ENCODE measurements at regions of chr19 and their contacts with region 1.

Region 1: GRCh38 chr19:40633207-40633606 is 32.0 kb downstream of the LTBP4 start:
- DNase-seq: no peak
- ATAC-seq: no peak
- H3K4me3 ChIP-seq: no peak overlapping the region
- H3K4me3 Mint-ChIP-seq: no peak overlapping the region
- H3K27ac ChIP-seq: no peak overlapping the region
- H3K27ac Mint-ChIP-seq: no peak overlapping the region
- H3K4me1 ChIP-seq: peaks cover 0 to 5% of the 10 kb centered on the region in 2 donors
- H3K4me1 Mint-ChIP-seq: peaks cover 4% of the 10 kb centered on the region
- H3K27me3 ChIP-seq: peaks cover 0 to 13% (median 0%) of the 10 kb centered on the region in 4 experiments
- H3K27me3 Mint-ChIP-seq: peaks cover 10% of the 10 kb centered on the region
- CTCF ChIP-seq: no peak

Region 2: GRCh38 chr19:40139533-40140287 is 493.5 kb before region 1 on chr19:
- CTCF ChIA-PET with region 1: interaction called, 39 read pairs
- POLR2A ChIA-PET with region 1: no interaction called
- intact Hi-C with region 1: no loop called
- DNase-seq: peak; percentile 73
- ATAC-seq: no peak
- H3K4me3 ChIP-seq: no peak overlapping the region
- H3K4me3 Mint-ChIP-seq: no peak overlapping the region
- H3K27ac ChIP-seq: no peak overlapping the region
- H3K27ac Mint-ChIP-seq: peak overlapping the region; percentile 46
- H3K4me1 ChIP-seq: peaks cover 23 to 26% of the 10 kb centered on the region in 2 donors
- H3K4me1 Mint-ChIP-seq: peaks cover 30% of the 10 kb centered on the region
- H3K27me3 ChIP-seq: no peaks in the 10 kb centered on the region
- H3K27me3 Mint-ChIP-seq: peaks cover 10% of the 10 kb centered on the region
- CTCF ChIP-seq: peak; percentile 81

Region 3: GRCh38 chr19:40529093-40529954 is 103.9 kb before region 1 on chr19:
- CTCF ChIA-PET with region 1: interaction called, 17 read pairs
- POLR2A ChIA-PET with region 1: no interaction called
- intact Hi-C with region 1: loop called (anchors 1 kb)
- DNase-seq: peak; percentile 95
- ATAC-seq: peak; percentile 91
- H3K4me3 ChIP-seq: peak overlapping the region; percentile 9 to 69 (median 41)
- H3K4me3 Mint-ChIP-seq: peak overlapping the region; percentile 82
- H3K27ac ChIP-seq: no peak overlapping the region
- H3K27ac Mint-ChIP-seq: peak overlapping the region; percentile 64
- H3K4me1 ChIP-seq: peaks cover 13 to 14% of the 10 kb centered on the region in 2 donors
- H3K4me1 Mint-ChIP-seq: peaks cover 13% of the 10 kb centered on the region
- H3K27me3 ChIP-seq: peaks cover 0 to 35% (median 18%) of the 10 kb centered on the region in 4 experiments
- H3K27me3 Mint-ChIP-seq: peaks cover 44% of the 10 kb centered on the region
- CTCF ChIP-seq: peak; percentile 91

Region 4: GRCh38 chr19:40549007-40549708 is 84.0 kb before region 1 on chr19:
- CTCF ChIA-PET with region 1: interaction called, 20 read pairs
- POLR2A ChIA-PET with region 1: no interaction called
- intact Hi-C with region 1: loop called (anchors 5 kb)
- DNase-seq: peak; percentile 70
- ATAC-seq: peak; percentile 82
- H3K4me3 ChIP-seq: no peak overlapping the region
- H3K4me3 Mint-ChIP-seq: no peak overlapping the region
- H3K27ac ChIP-seq: no peak overlapping the region
- H3K27ac Mint-ChIP-seq: peak overlapping the region; percentile 22
- H3K4me1 ChIP-seq: peaks cover 4% of the 10 kb centered on the region in 2 donors
- H3K4me1 Mint-ChIP-seq: peaks cover 10% of the 10 kb centered on the region
- H3K27me3 ChIP-seq: peaks cover 0 to 49% (median 28%) of the 10 kb centered on the region in 4 experiments
- H3K27me3 Mint-ChIP-seq: peaks cover 48% of the 10 kb centered on the region
- CTCF ChIP-seq: peak; percentile 55

Region 5: DNA sequence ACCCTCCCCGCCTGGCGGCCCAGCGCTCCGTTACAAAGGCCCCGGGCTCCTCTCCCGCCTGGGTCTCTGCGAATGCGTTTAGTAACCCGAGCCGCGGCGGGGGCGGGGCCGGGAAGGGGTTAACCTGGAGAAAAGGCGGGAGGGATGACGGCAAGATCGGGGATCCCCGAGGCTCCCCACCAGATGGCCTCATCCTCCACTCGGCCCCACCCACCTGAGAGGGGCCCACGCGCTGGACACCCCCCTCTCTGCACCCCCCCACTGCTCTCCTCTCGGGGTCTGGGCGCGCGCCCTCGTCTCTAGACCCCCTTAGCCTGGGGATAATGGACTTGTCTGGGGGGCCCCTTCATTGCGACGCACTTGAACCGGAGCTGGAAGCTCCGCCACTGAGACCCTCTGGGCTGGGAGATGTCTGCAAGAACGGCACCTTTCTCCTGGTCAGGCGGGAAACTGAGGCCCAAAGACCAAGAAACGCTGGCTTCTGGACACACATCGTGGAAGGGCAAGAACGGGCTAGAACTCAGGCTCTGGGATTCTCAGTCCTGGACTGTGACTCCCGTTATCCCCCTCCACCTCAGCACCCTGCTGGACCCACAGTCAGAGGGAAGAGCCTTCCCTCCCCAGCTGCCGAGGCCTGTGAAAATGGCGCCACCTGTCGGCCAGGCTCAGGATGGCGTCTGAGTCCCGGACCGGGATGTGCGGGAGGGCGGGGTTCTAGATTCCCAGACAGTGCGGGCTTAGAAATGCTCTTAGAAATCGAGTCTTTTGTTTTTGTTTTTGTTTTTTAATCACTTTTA is 34.9 kb before region 1 on chr19:
- CTCF ChIA-PET with region 1: interaction called, 84 read pairs
- POLR2A ChIA-PET with region 1: interaction called, 3 read pairs
- intact Hi-C with region 1: loop called (anchors 1 kb)
- DNase-seq: peak; percentile 87
- ATAC-seq: peak; percentile 60
- H3K4me3 ChIP-seq: no peak overlapping the region
- H3K4me3 Mint-ChIP-seq: peak overlapping the region; percentile 61
- H3K27ac ChIP-seq: no peak overlapping the region
- H3K27ac Mint-ChIP-seq: peak overlapping the region; percentile 32
- H3K4me1 ChIP-seq: peaks cover 59 to 65% of the 10 kb centered on the region in 2 donors
- H3K4me1 Mint-ChIP-seq: peaks cover 45% of the 10 kb centered on the region
- H3K27me3 ChIP-seq: peaks cover 0 to 69% (median 40%) of the 10 kb centered on the region in 4 experiments
- H3K27me3 Mint-ChIP-seq: peaks cover 35% of the 10 kb centered on the region
- CTCF ChIP-seq: peak; percentile 98

Region 6: DNA sequence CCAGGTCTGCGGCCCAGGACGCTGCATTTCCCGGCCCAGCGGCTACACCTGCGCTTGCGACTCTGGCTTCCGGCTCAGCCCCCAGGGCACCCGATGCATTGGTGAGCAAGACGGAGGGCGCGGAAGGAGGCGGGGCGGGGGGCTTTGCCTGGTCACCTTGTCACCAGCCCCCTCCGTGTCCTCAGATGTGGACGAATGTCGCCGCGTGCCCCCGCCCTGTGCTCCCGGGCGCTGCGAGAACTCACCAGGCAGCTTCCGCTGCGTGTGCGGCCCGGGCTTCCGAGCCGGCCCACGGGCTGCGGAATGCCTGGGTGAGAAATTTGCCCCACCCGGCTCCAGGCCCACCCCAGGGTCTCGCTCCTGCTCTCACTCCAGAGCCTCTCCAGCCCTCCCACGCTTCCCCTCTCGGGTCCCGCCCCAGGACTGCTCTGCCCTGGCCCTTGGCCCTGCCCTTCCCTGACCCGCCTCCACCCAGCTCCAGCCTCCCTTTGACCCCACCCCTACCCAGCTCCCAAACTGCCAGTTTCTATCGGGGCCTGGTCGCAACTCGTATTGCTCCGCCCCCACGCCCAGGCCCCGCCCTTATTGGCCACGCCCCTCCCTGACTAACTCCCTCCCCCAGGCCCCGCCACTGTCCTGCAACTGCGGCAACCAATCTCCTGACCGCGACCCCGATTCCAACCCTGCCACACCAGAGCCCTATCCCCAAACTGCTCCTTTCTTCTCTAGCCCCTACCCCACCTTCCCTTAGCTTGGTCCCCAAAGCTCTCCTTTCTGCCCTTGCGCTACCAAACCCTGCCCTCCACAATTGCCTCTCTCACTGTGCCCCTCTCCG is 23.4 kb before region 1 on chr19:
- CTCF ChIA-PET with region 1: interaction called, 84 read pairs
- POLR2A ChIA-PET with region 1: interaction called, 4 read pairs
- intact Hi-C with region 1: loop called (anchors 1 kb)
- DNase-seq: peak; percentile 90
- ATAC-seq: peak; percentile 57
- H3K4me3 ChIP-seq: peak overlapping the region in 4 of 5 experiments; percentile 49 to 72 (median 62)
- H3K4me3 Mint-ChIP-seq: peak overlapping the region; percentile 92
- H3K27ac ChIP-seq: peak overlapping the region; percentile 83 to 93
- H3K27ac Mint-ChIP-seq: peak overlapping the region; percentile 98
- H3K4me1 ChIP-seq: peaks cover 38 to 58% of the 10 kb centered on the region in 2 donors
- H3K4me1 Mint-ChIP-seq: peaks cover 56% of the 10 kb centered on the region
- H3K27me3 ChIP-seq: no peaks in the 10 kb centered on the region
- H3K27me3 Mint-ChIP-seq: no peaks in the 10 kb centered on the region
- CTCF ChIP-seq: no peak

Region 7: DNA sequence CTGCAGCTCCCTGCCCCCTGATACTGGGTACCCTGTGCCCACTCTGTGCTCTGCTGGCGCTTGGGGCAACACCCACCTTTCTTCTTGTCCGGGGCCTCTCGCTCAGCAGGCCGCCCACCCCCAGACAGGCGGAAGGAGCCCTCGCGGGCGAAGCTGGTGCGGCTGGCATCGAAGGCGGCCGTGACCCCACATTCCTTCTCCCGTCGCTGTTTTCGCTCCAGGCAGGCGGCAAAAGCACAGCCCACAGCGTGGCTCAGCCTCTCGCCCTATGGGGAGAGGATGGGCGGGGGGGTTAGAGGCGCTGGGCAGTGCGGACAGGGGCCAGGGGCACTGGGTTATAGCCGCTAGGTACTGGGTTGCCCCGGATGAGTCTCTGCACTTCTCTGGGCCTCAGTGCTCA is 43.9 kb after region 1 on chr19:
- CTCF ChIA-PET with region 1: no interaction called
- POLR2A ChIA-PET with region 1: no interaction called
- intact Hi-C with region 1: no loop called
- DNase-seq: no peak
- ATAC-seq: no peak
- H3K4me3 ChIP-seq: no peak overlapping the region
- H3K4me3 Mint-ChIP-seq: no peak overlapping the region
- H3K27ac ChIP-seq: no peak overlapping the region
- H3K27ac Mint-ChIP-seq: no peak overlapping the region
- H3K4me1 ChIP-seq: no peaks in the 10 kb centered on the region
- H3K4me1 Mint-ChIP-seq: no peaks in the 10 kb centered on the region
- H3K27me3 ChIP-seq: no peaks in the 10 kb centered on the region
- H3K27me3 Mint-ChIP-seq: no peaks in the 10 kb centered on the region
- CTCF ChIP-seq: no peak

Measured in B cell (primary cell).